ENCODE measurements at regions of chr1 and their contacts with region 1.

Region 1: GRCh38 chr1:150515328-150516048 is at the start of gene FALEC:
- DNase-seq: peak; percentile 94 to 99 (median 96)
- H3K4me3 ChIP-seq: peak within 1 kb of the TSS; percentile 59 to 91 (median 76)
- H3K27ac ChIP-seq: peak within 1 kb of the TSS; percentile 31 to 95 (median 87)
- H3K27me3 ChIP-seq: no peaks in the 10 kb centered on the region
- CTCF ChIP-seq: peak in 31 of 56 donors; percentile 8 to 62 (median 26)
- total RNA-seq, gene FALEC: 0.99 to 5.8 (median 2.4) TPM in 112 of 120 experiments, not detected in the others

Region 2: DNA sequence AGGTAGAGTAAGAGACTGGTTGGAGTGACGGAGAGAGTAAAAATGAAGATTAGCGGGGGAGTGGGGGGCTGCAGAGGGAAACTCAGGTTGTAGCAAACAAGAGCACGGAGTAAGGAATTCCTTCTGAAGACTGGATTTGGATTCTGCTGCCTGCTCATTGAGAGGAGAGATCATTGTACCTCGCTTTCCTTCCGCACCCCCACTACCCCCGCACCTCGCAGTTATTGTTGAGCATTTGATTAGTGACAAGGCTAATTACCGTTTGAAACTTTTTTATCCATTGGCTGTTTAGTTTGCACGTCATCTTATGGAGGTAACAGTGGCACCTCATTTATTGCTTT is 193.7 kb before region 1 on chr1:
- intact Hi-C with region 1: loop called in 1 of 2 experiments (anchors 1 kb)
- DNase-seq: no peak
- H3K4me3 ChIP-seq: peak overlapping the region; percentile 62 to 97 (median 82)
- H3K27ac ChIP-seq: peak overlapping the region in 54 of 59 donors; percentile 35 to 93 (median 82)
- H3K27me3 ChIP-seq: no peaks in the 10 kb centered on the region
- CTCF ChIP-seq: no peak

Region 3: GRCh38 chr1:150473659-150474058 is 41.8 kb before region 1 on chr1:
- intact Hi-C with region 1: loop called in 1 of 2 experiments (anchors 5 kb)
- DNase-seq: peak in 1 of 10 donors; percentile 25
- H3K4me3 ChIP-seq: no peak overlapping the region
- H3K27ac ChIP-seq: peak overlapping the region in 47 of 59 donors; percentile 0 to 80 (median 65)
- H3K27me3 ChIP-seq: no peaks in the 10 kb centered on the region
- CTCF ChIP-seq: no peak

Region 4: DNA sequence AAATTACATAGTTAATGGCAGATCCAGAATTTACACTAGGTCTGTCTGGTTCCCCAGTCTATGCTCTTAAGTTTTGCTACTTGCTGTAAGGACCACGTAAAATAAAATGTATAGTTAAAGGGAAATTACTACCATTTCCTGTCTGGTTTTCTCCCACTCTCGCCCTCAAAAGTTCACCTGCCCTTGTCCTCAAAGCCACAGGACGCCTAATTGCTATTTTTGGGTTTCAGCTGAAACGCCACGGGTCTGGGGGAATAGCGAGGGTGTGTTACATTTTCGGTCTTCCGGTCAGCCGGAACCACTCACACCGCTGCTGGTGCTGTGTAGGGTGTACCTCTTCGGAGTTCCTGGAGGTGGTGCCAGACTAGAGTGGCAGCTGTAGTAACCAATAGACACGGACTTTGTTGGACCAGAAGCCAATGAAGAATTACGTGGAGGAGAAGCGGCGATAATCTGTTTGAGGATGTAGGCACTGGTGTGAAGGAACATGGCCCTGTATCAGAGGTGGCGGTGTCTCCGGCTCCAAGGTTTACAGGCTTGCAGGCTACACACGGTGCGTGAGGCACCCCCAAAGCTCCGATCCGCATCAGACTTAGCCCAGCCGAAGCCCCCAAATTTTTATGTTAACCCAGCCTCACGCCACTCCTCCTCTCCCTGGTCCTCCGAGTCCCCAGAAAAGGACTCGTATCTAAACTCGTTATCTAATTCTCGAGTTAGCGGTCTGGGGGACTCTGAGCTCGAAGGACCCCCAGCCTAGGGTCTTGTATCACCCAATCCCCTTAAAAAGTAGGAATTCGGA is 28.3 kb before region 1 on chr1 and contains the start of gene TARS2:
- intact Hi-C with region 1: loop called in 1 of 2 experiments (anchors 2 kb)
- DNase-seq: peak; percentile 63 to 97 (median 92)
- H3K4me3 ChIP-seq: peak within 1 kb of the TSS; percentile 55 to 99 (median 84)
- H3K27ac ChIP-seq: peak within 1 kb of the TSS in 49 of 59 donors; percentile 16 to 87 (median 71)
- H3K27me3 ChIP-seq: no peaks in the 10 kb centered on the region
- CTCF ChIP-seq: peak in 54 of 56 donors; percentile 19 to 70 (median 50)
- total RNA-seq, gene TARS2: 30.3 to 63.1 (median 45.8) TPM

Region 5: GRCh38 chr1:150532868-150533302 is 17.4 kb after region 1 on chr1:
- intact Hi-C with region 1: loop called in 1 of 2 experiments (anchors 2 kb)
- DNase-seq: no peak
- H3K4me3 ChIP-seq: peak overlapping the region in 6 of 59 donors; percentile 1 to 56 (median 40)
- H3K27ac ChIP-seq: peak overlapping the region in 30 of 59 donors; percentile 4 to 78 (median 56)
- H3K27me3 ChIP-seq: no peaks in the 10 kb centered on the region
- CTCF ChIP-seq: peak in 10 of 56 donors; percentile 2 to 41 (median 14)

Region 6: GRCh38 chr1:150789396-150789795 is 273.9 kb after region 1 on chr1:
- intact Hi-C with region 1: no loop called
- DNase-seq: no peak
- H3K4me3 ChIP-seq: no peak overlapping the region
- H3K27ac ChIP-seq: no peak overlapping the region
- H3K27me3 ChIP-seq: no peaks in the 10 kb centered on the region
- CTCF ChIP-seq: no peak

Measured in dorsolateral prefrontal cortex (tissue), 120 donors.